Activated T-helper 1 cell treated with anti-CD3 and anti-CD28 coated beads, Interleukin-12 subunit alpha, Interleukin-12 subunit beta, Interleukin-2, Interleukin-4 antibody, amounts not matched to agents 30 ng/mL and 10 ng/mL and 1 ng/mL, durations not matched to agents 14 hours and 24 hours and 36 hours (primary cell): ENCODE measurements at regions of chr7 and their contacts with region 1.

Region 1: DNA sequence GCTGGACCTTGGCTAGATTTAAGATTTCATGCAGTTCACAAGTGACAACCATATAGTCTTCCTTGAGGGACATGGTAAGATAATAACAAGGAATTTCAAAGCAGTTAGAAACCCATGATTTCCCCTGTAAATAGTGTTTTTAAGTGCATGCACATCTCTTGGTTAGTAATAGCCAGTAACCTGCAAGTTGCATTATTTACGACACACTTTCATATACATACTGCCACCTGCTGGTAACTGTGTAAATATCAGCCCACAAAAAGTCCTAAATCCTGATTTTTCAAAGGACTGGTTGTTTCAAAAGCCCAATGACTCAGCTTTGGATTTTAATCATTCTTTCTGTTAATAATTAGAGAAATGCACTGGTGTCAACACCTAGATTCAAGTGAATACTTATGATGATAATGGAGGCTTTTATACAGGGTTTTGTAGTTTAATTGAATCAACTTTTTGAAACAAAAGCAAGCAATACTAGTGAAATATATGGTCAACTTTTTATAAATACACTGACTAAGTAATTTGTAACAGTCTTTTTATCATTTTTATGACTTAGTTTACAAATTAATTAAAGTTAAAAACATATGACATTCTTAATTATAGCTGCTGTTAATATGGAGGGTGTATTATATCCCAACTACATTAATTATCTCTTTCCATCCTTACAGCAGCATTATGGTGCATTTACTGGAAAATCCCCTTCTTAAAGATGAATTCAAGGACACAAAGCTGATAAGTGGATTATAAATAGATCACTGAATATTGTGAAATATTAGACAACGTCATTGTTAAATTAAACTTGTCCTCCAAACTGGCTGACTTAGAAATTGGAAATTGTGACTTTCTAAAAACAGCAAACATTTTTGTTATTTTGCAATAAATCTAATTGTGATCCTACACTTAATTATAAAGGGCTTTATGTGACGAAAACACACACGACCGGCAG is 367.7 kb upstream of the SEMA3D start:
- DNase-seq: no peak
- H3K4me3 Mint-ChIP-seq: no peak overlapping the region
- H3K27ac Mint-ChIP-seq: no peak overlapping the region
- H3K4me1 Mint-ChIP-seq: no peaks in the 10 kb centered on the region
- H3K27me3 Mint-ChIP-seq: peaks cover 1% of the 10 kb centered on the region

Region 2: GRCh38 chr7:83936056-83936708 is 1618.3 kb before region 1 on chr7:
- intact Hi-C with region 1: loop called (anchors 5 kb)
- DNase-seq: peak; percentile 2
- H3K4me3 Mint-ChIP-seq: no peak overlapping the region
- H3K27ac Mint-ChIP-seq: no peak overlapping the region
- H3K4me1 Mint-ChIP-seq: no peaks in the 10 kb centered on the region
- H3K27me3 Mint-ChIP-seq: peaks cover 5% of the 10 kb centered on the region

Region 3: GRCh38 chr7:83976295-83976694 is 1578.2 kb before region 1 on chr7:
- intact Hi-C with region 1: loop called (anchors 5 kb)
- DNase-seq: no peak
- H3K4me3 Mint-ChIP-seq: no peak overlapping the region
- H3K27ac Mint-ChIP-seq: no peak overlapping the region
- H3K4me1 Mint-ChIP-seq: no peaks in the 10 kb centered on the region
- H3K27me3 Mint-ChIP-seq: peaks cover 2% of the 10 kb centered on the region

Region 4: DNA sequence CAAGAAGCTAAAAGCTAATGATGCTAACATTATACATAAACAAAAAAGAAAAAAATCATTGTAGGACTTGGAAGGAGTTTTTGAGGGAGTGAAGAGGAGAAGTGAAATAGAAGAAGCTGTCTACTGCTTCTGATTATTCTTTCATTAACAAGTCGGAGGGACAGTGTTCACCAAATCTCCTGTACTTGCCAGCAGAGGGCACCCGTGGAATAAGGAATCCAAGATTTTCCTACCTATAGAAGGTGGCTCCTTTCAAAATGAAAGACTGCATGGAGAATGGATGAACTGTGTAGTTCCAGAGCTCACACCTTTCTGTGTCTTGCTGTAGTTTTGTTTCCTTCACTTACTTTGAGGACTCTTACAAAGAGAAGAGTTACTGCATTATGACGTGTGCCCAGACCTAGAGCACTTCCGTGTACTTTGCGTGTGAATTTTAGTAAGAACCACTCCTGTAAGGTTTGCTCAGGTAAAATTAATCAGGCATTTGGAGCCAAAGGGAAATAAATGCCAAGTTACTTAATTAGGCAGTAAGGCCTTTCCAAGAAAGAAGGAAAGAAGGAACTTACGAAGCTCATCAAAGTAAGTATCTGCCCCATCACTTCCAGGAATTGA is 512.8 kb before region 1 on chr7:
- intact Hi-C with region 1: loop called (anchors 1 kb)
- DNase-seq: no peak
- H3K4me3 Mint-ChIP-seq: no peak overlapping the region
- H3K27ac Mint-ChIP-seq: no peak overlapping the region
- H3K4me1 Mint-ChIP-seq: no peaks in the 10 kb centered on the region
- H3K27me3 Mint-ChIP-seq: no peaks in the 10 kb centered on the region

Region 5: GRCh38 chr7:85186521-85187241 is 367.8 kb before region 1 on chr7 and contains the start of gene SEMA3D:
- intact Hi-C with region 1: loop called (anchors 2 kb)
- DNase-seq: peak; percentile 2
- H3K4me3 Mint-ChIP-seq: no peak within 1 kb of the TSS
- H3K27ac Mint-ChIP-seq: peak within 1 kb of the TSS; percentile 23
- H3K4me1 Mint-ChIP-seq: no peaks in the 10 kb centered on the region
- H3K27me3 Mint-ChIP-seq: peaks cover 31% of the 10 kb centered on the region
- total RNA-seq, gene SEMA3D: 0.60 and 0.64 TPM in 2 replicates